HEK293 (cell line): ENCODE measurements at regions of chr17 and their contacts with region 1.

Region 1: GRCh38 chr17:77957857-77958715 is at the start of gene TNRC6C:
- H3K4me3 ChIP-seq: peak within 1 kb of the TSS; percentile 79
- H3K27ac ChIP-seq: peak within 1 kb of the TSS; percentile 89; the same call in 1 of the 2 replicates
- H3K4me1 ChIP-seq: peaks cover 16% of the 10 kb centered on the region
- CTCF ChIP-seq: peak; percentile 45; the same call in 1 of the 2 replicates

Region 2: GRCh38 chr17:77645072-77646045 is 312.7 kb before region 1 on chr17:
- CTCF ChIA-PET with region 1: no interaction called
- POLR2A ChIA-PET with region 1: interaction called, 10 read pairs
- H3K4me3 ChIP-seq: no peak overlapping the region
- H3K27ac ChIP-seq: no peak overlapping the region
- H3K4me1 ChIP-seq: no peaks in the 10 kb centered on the region
- CTCF ChIP-seq: no peak

Region 3: DNA sequence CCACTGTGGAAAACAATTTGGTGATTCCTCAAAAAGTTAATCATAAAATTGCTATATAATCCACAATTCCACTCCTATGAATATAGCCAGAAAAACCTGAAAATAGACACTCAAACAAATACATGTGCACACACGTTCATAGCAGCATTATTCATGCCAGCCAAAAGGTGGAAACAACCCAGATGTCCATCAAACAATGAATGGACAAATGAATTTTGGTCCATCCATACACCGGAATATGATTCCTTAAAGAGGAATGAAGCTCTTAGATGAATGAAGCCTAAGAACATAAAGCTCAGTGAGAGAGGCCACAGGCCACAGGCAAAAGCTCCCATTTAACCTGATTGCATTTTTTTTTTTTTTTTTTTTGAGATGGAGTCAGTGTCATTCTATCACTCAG is 114.2 kb before region 1 on chr17:
- CTCF ChIA-PET with region 1: no interaction called
- POLR2A ChIA-PET with region 1: interaction called, 13 read pairs
- H3K4me3 ChIP-seq: no peak overlapping the region
- H3K27ac ChIP-seq: no peak overlapping the region
- H3K4me1 ChIP-seq: peaks cover 4% of the 10 kb centered on the region; the same call in 1 of the 2 replicates
- CTCF ChIP-seq: no peak

Region 4: GRCh38 chr17:77914385-77915254 is 43.5 kb before region 1 on chr17:
- CTCF ChIA-PET with region 1: no interaction called
- POLR2A ChIA-PET with region 1: interaction called, 28 read pairs
- H3K4me3 ChIP-seq: no peak overlapping the region
- H3K27ac ChIP-seq: no peak overlapping the region; the same call in 1 of the 2 replicates
- H3K4me1 ChIP-seq: peaks cover 26% of the 10 kb centered on the region
- CTCF ChIP-seq: peak; percentile 68

Region 5: DNA sequence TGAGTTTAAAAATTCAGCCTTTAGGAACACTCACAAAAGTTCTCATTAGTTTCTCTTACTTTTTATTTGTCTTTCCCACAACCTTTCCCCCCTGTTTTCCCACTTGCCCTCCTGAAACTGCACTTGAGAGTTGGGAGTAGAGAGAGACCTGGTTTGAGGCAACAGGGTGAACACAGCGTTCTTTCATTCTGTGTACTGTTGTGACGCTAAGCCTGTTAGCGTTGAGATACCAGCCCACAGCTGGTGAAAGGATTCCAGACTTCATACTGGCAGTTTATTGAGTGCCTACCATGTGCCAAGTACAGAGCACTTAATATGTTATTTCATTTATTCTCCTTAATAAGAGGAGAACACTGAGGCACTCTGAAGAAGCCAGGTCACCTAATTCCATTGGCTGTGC is 10.7 kb after region 1 on chr17:
- CTCF ChIA-PET with region 1: interaction called, 5 read pairs
- POLR2A ChIA-PET with region 1: interaction called, 44 read pairs
- H3K4me3 ChIP-seq: no peak overlapping the region
- H3K27ac ChIP-seq: no peak overlapping the region
- H3K4me1 ChIP-seq: peaks cover 17% of the 10 kb centered on the region
- CTCF ChIP-seq: no peak

Region 6: DNA sequence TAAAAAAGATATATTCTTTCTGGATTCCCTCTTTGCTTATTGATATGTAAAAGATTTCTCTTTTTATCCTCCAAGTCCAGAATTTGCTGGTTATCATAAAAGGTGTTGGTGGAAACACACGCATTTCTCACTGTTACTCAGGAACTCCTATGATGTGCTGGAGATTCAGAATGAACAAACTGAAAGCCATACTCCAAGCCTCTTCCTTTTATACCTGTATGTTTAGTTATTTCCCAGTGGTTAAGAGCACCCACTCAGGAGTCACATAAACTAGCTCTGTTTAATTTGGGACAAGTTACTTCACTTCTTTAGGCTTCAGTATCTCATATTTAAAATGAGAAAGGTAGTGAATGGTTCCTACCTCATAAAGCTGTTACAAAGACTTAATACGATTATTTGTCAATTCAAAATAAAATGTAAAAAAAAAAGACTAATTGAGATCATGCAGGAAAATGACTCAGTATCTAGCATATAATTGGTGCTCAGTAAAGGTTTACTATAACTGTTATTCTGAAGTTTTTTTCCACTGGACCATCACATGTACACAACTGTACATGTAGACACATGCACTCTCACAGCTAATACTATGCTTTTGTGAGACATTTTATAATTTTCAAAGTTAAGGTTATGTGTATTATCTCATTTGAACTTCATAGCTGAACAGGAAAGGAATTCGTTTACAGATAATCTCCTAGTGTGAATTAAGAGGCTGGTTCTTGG is 47.5 kb after region 1 on chr17:
- CTCF ChIA-PET with region 1: interaction called, 4 read pairs
- POLR2A ChIA-PET with region 1: interaction called, 24 read pairs
- H3K4me3 ChIP-seq: no peak overlapping the region
- H3K27ac ChIP-seq: no peak overlapping the region
- H3K4me1 ChIP-seq: peaks cover 11% of the 10 kb centered on the region
- CTCF ChIP-seq: no peak